Left ventricle myocardium superior (tissue), 1 donor: ENCODE measurements at regions of chr2 and their contacts with region 1.

Region 1: DNA sequence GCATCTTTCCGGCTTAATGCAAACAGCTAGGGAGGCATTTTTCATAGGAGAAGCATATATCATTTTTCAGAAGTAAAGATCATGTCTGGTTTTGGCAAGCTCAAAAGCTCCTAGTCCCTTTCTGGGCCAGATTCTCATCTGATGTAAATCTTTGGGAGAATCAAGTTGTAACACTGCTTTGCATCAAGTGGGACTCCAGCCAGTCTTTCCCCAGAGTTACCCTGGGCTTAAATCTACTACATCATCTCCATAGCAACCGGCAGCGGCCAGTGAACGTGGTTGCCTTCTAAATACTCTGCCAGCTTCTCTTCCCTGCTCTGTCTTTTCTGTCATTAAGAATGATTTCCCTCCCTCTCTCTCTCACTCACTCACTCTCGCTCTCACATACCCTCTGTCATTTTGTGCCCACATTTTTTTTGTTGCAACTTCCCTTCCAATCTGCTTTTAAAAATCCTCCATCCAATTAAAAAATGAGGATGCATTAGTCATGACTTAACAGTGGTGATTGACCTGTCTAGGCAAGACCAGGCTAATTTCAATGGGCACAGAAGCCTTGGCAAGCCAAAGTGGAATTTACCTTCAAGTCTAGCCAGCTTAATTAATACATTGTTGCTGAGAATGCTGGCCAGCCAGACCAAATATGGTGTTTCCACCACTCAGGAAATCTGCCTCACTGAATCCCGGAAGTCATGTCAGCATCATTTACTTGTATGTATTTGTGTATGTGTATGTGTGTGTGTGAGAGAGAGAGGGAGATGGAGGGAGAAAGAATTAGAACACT is 93.0 kb downstream of the NRP2 start:
- DNase-seq: no peak
- ATAC-seq: no peak

Region 2: GRCh38 chr2:205746420-205746785 is 28.9 kb before region 1 on chr2:
- intact Hi-C with region 1: no loop called
- DNase-seq: no peak
- ATAC-seq: no peak

Region 3: DNA sequence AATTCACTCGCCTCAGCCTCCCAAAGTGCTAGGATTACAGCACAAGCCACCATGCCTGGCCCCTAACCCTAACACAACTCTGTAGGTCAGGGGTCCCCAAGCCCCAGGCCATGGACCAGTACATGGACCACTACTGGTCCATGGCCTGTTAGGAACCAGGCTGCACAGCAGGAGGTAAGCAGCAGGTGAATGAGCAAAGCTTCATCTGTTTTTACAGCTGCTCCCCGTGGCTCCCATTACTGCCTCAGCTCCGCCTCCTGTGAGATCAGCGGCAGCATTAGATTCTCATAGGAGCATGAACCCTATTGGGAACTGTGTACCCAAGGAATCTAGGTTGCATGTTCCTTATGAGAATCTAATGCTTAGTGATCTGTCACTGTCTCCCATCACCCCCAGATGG is 108.7 kb after region 1 on chr2:
- intact Hi-C with region 1: loop called (anchors 2 kb)
- DNase-seq: no peak
- ATAC-seq: no peak

Region 4: DNA sequence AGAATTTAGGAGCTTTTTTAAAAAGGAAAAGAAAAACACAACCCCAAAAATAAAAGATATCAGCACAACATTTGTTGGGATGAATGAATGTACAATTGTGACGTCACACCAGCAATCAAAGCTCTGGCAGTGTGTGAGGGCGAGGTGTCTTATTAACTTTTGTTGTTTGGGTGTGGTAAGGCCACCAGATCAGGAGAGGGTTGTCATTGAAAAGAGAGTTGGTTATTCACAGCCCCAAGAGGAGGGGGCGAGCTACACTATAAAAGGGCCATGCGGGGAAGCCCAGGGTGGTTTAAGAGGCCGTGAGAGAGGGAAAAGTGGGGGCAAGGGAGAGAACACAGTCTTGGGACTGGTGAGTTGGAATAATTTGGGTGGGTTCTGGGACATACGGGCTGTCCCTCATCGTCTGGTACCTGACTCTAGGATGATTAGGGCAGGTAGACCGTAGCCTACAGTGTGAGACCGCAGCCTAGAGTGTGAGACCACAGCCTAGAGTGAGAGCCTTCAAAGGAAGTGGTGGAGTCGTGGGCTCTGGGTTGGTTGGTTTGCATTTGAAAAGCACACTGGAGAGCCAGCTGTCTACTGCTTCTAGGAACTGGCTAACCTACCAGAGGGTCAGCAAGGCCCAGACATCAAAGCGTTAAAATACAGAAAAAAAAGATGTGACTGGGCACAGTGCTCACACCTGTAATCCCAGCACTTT is 182.3 kb after region 1 on chr2:
- intact Hi-C with region 1: no loop called
- DNase-seq: no peak
- ATAC-seq: no peak